G401 (cell line): ENCODE measurements at regions of chr5 and their contacts with region 1.

Region 1: DNA sequence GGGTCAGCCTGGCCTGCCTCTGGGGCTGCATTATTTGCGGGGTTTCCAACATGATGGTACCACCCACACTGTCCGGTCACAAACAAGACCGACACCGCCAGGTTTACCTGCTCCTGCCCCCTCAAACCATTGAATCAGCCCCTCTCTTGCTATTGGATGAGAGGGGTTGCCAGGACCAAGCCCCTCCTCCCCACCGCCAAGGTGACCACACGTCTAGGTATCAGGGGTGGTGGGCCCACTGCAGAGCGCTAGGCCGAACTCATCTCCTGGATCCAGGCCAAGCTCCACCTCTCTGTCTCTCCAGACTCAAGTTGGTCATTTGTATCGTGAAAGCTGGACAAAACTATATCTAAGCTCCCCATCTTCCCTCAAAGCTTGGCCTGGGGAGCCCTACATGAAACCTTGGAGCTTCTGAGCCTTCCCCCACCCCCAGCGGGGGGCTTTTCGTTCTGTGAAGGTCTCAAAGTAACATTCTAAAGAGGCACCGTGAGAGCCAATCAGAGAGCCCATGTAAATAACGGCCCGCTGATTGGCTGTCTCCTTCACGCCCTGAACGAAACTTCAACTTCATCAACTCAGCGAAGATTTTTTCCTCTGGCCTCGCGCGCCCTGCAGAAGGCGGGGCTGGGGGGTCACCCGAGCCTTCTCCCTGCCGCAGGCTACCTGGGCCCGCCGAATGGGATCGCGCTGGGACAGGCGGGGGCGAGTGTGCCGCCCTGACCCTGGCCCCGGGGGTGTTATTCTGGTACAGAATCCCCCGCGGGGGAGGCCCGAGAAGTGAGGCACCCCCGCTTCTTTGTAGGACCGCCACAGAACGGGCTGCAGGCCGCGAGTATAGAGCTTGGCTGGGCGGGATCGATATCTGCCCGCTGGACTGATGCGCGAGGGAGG is 49.6 kb upstream of the PSD2 start:
- DNase-seq: peak; percentile 85

Region 2: GRCh38 chr5:139701056-139701741 is 44.8 kb before region 1 on chr5:
- in situ Hi-C with region 1: loop called (anchors 5 kb)
- DNase-seq: peak; percentile 71